Posterior vena cava (tissue), 2 donors: ENCODE measurements at regions of chr22 and their contacts with region 1.

Region 1: DNA sequence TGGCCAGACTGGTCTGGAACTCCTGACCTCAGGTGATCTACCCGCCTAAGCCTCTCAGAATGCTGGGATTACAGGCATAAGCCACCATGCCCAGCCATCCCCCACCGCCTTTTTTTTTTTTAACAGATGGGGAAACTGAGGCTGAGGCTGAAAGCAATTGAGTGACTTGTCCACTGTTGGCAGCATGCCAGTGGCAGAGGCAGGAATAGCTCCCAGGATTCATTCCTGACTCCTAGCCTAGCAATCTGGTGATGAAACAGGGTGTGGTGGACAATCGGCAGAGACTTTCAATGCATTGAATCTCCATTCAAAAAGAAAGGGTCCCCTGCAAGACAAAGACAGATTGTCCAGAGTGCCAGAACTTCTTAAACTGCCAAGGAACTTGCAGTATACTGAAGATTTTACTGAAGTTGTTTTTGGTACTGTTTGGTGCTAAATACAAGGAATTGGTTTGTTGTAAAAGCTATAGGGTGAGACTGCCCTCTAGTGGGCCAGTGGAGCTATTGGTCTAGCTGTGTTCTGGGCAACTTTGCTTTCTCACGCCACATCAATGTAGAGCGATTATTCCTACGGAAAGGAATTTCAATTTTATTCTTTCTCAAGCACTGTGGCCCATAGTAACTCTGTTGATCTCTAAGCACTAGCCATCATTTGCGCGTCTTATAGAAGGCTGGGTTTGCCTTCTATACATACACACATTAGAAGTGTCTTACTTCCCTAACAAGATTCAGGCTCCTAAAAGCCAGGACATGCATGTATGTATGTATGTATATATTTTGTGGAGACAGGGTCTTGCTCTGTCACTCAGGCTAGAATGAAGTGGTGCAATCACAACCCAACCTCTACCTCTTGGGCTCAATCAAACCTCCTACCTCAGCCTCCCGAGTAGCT is 21.0 kb downstream of the C22orf31 start:
- DNase-seq: no peak

Region 2: DNA sequence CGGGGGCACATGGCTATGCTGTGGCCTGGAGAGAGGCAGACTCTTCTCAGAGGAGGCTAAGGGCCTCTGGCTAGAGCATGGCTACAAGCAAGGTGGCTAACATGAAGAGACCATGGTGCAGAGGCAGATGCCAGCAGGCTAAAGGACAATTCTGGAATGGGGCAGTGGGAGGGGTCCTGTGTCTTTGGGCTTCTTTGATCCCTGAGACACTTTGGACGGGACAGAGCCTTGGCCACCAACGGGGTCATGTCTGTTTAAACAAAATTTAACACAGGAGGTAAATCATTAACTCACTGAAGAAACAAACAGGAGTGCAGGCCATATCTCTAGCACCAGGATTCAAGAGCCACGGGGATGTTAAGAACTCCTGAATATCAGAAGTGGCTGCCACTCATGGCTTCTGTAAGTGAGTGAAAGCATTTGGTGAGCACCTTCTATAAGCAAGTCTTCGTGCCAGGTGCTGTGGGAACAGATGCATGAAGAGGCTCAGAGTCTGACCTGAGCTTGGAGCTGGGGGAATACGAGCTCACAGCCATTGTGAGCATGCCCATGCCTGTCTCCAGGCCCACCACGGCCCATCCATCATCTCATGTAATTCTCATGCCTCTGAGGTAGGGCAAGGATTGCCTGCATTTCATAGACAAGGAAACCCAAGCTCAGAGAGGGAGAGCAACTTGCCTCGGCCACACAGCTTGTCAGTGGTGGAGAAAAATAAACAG is 175.6 kb before region 1 on chr22:
- intact Hi-C with region 1: loop called in 1 of 2 experiments (anchors 5 kb)
- DNase-seq: no peak

Region 3: DNA sequence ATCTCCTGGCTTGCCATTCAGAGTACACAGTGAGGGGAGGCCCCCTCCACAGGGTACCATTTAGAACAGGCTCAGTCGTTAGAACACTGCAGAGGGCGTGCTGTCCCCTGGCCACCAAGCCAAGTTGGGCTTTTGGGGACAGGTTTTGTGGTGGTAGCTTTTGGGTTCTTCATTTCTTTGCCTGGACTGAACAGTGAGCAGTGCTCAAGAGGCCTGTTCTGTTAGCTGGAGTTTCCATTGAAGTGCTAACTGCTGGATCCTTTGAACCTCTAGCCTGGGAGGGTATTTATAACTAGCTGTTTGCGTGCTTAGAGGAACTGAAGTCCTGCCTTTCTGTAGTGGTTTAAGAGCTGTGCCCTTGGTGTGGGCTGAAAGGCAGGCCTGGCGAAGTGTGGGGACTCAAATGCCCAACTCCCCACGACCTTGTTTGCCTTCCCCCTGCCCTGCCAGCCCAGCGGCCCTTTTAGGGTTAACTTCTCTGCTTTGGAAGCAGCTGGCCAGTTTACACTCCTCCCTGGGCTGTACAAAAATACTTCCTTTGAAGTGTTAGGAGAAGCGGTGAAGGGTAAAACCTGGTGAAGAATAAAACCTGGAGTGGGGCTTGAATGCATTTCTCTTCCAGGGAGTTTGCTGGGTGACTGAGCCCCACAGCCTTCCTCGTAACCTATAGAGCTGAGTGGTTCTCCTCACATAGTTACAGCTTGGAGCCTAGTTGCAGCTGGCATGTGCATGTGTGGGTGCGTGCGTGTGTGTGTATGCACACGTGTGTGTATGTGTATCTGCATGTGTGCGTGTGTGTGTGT is 122.7 kb before region 1 on chr22:
- intact Hi-C with region 1: loop called in 1 of 2 experiments (anchors 10 kb)
- DNase-seq: no peak